ENCODE measurements at regions of chr3 and their contacts with region 1.

Region 1: DNA sequence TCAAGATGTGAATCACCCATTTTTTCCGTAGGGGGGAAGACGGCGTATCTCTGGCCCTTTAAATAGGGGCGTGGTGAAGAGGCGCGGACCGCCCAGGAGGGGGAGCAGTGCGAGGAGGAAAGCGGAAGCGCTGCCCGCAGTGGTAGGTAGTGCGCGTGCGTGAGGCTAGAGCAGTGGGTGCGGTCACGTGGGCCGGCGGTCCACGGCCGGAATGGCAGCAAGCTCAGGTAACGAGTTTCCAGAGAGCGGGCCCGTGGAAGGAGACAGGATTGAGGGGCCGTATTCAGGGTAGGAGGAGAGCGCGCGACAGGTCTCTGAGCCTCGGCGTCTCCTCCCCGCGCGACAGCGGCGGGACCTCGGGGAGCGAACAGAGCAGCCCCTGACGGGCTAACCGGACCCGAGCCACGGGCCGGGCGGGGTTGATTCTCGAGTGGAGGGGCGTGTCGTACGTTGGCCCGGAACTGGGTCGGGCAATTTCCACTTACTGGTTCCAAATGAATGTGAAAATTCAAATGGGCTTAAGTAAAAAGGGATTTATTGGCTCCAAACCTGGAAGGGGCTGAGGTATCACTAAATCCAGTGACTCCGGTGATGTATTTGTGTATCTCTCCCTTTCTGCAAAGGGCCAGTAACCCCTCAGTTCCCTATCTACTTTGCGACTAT is at the start of gene VPS8:
- DNase-seq: peak; percentile 92 to 97 (median 96)
- ATAC-seq: peak; percentile 97
- H3K4me3 ChIP-seq: peak within 1 kb of the TSS; percentile 94
- H3K4me3 Mint-ChIP-seq: peak within 1 kb of the TSS; percentile 87 to 99 (median 96)
- H3K27ac ChIP-seq: peak within 1 kb of the TSS; percentile 88
- H3K27ac Mint-ChIP-seq: peak within 1 kb of the TSS; percentile 93 to 98 (median 97)
- H3K4me1 ChIP-seq: peaks cover 15 to 44% of the 10 kb centered on the region in 2 donors
- H3K4me1 Mint-ChIP-seq: peaks cover 27 to 59% (median 57%) of the 10 kb centered on the region in 7 donors
- H3K27me3 ChIP-seq: no peaks in the 10 kb centered on the region
- H3K27me3 Mint-ChIP-seq: peaks cover 0 to 4% (median 0%) of the 10 kb centered on the region in 5 donors
- total RNA-seq, gene VPS8: 77.9 to 119 (median 106) TPM

Region 2: DNA sequence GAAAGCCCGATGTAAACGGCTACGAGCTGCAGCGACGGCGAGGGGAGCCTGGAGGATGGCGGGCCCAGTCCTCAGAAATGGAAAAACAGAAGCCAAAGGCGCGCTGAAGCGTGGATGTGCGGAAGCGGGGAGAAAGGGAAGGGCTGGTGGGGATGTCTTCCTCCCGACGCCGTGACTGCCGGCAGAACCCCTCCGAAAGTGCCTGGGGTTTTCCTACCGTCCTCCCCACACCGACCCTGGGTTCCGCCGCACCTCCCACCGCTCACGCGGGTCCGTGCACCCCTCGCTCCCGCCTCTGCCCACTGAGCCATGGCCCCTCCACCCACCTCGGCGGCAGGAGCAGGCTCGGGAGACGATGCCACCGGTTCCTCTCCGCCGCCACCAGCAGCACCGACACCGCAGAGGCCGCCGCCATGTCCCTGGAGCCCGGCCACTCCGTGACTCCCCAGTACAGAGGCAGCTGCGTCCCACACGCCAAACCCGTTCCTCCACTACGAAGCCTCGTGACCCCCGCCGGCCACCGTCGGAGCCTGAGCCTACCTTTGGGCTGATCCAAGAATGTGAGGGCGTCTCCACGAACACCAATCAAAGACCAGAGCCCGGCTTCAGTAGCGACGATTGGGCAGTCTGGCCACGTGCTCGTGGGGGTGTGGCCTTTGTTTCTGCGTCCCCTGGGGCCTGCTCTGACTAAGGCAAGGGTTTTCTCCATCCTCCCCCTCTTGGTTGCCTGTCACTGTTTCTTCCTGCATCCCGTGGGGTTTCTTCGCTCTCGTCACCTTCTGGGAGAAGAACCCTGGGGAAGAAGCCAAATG is 1712.9 kb before region 1 on chr3 and contains the start of gene MCCC1:
- CTCF ChIA-PET with region 1: no interaction called
- POLR2A ChIA-PET with region 1: no interaction called
- intact Hi-C with region 1: loop called in 1 of 2 experiments (anchors 2 kb)
- DNase-seq: peak; percentile 82 to 98 (median 97)
- ATAC-seq: peak; percentile 99
- H3K4me3 ChIP-seq: peak within 1 kb of the TSS; percentile 73
- H3K4me3 Mint-ChIP-seq: peak within 1 kb of the TSS; percentile 87 to 98 (median 97)
- H3K27ac ChIP-seq: peak within 1 kb of the TSS; percentile 83
- H3K27ac Mint-ChIP-seq: peak within 1 kb of the TSS; percentile 90 to 99 (median 97)
- H3K4me1 ChIP-seq: peaks cover 7 to 10% of the 10 kb centered on the region in 2 donors
- H3K4me1 Mint-ChIP-seq: peaks cover 18 to 52% (median 43%) of the 10 kb centered on the region in 7 donors
- H3K27me3 ChIP-seq: no peaks in the 10 kb centered on the region
- H3K27me3 Mint-ChIP-seq: no peaks in the 10 kb centered on the region
- total RNA-seq, gene MCCC1: 17.7 to 37.5 (median 31.8) TPM

Region 3: DNA sequence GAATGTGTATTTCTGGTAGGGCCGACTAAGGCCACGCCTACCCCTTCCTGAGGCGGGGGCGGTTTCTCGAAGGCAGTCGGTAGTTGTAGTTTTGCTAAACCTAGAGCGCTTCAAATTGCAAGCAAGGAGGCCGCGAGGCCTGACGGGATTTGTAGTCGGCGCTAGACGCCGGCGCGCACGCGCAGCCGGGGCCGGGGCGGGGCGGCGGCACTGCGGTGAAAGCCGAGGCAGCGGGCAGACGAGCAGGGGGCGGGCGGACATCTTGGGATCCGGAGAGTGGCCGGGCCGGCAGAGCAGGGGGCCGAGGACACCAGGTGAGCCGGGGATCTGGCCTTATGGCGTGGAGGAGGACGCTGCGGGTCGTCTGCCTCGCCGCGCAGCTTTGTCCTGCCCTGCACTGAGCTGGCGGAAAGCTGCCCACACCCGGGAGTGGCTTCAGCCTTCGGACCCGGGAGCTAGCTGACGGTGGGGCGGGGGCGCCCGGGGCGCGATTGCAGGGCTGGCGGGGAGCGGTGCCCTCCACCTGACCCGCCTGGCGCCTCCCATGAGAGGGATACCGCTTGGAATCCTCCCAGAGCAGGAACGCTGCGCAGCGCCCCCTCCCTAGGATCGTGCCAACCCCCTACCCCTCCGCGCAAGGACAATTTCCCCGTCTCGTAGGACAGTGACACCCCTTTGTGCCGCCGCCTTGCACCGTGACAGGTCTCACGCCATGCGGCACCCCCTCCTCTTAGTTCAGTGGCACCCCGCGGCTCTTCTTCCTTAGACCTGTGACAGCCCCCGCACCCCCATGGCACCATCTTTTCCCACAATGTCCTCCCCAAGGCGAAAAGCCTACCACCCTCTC is 637.3 kb before region 1 on chr3 and contains the start of gene AP2M1:
- CTCF ChIA-PET with region 1: no interaction called
- POLR2A ChIA-PET with region 1: no interaction called
- intact Hi-C with region 1: loop called in 1 of 2 experiments (anchors 1 kb)
- DNase-seq: peak; percentile 98 to 99 (median 98)
- ATAC-seq: peak; percentile 98
- H3K4me3 ChIP-seq: peak within 1 kb of the TSS; percentile 82
- H3K4me3 Mint-ChIP-seq: peak within 1 kb of the TSS; percentile 89 to 98 (median 96)
- H3K27ac ChIP-seq: peak within 1 kb of the TSS; percentile 95
- H3K27ac Mint-ChIP-seq: peak within 1 kb of the TSS; percentile 75 to 94 (median 90)
- H3K4me1 ChIP-seq: peaks cover 18 to 20% of the 10 kb centered on the region in 2 donors
- H3K4me1 Mint-ChIP-seq: peaks cover 14 to 46% (median 38%) of the 10 kb centered on the region in 7 donors
- H3K27me3 ChIP-seq: no peaks in the 10 kb centered on the region
- H3K27me3 Mint-ChIP-seq: no peaks in the 10 kb centered on the region
- total RNA-seq, gene AP2M1: 111 to 217 (median 185) TPM

Region 4: DNA sequence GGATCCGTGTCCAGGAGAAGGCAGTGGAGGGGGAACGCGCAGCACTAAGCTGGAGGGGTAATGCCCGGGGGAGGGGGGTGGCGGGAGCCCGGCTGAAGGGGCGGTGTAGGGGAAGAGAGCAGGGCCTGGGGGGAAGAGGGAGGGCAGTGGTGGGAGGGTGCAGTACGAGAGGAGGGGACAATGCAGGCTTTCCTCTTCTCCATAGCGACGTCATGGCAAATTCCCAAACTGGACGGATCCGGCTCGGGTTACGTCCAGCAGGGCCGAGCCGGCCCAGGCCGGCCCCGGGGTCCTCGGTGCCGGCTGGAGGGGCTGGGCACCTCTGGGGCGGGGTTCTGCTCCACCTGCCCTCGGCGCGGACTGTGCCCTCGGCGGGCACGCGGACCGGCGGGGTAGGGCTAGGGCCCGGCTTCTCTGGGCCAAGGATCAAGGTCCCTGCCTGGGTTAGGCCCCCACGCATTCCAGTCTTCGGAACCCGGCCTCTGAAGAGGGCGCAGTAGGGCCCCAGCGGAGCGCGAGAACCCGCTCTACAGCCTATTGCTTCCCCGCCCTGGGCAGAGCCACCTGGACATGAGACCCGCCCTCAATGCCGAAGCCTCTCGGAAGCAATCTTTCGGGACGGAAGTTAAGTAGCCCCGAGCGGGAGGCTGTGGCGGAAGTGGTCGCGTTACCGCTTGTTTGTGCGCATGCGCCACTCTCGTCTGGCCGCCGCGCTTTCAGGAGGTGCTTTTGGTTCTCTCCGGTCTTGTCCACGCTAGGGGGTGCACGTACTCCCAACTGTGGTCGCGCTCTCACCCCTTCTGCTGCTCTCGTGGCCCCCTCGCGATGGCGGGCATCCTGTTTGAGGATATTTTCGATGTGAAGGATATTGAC is 449.2 kb before region 1 on chr3:
- CTCF ChIA-PET with region 1: no interaction called
- POLR2A ChIA-PET with region 1: no interaction called
- intact Hi-C with region 1: loop called (anchors 1 to 2 kb)
- DNase-seq: peak; percentile 74 to 94 (median 90)
- ATAC-seq: peak; percentile 87
- H3K4me3 ChIP-seq: peak overlapping the region; percentile 97
- H3K4me3 Mint-ChIP-seq: peak overlapping the region; percentile 95 to 100 (median 99)
- H3K27ac ChIP-seq: peak overlapping the region; percentile 84
- H3K27ac Mint-ChIP-seq: peak overlapping the region; percentile 91 to 98 (median 97)
- H3K4me1 ChIP-seq: peaks cover 11 to 13% of the 10 kb centered on the region in 2 donors
- H3K4me1 Mint-ChIP-seq: peaks cover 25 to 37% (median 30%) of the 10 kb centered on the region in 7 donors
- H3K27me3 ChIP-seq: no peaks in the 10 kb centered on the region
- H3K27me3 Mint-ChIP-seq: peaks cover 0 to 13% (median 0%) of the 10 kb centered on the region in 5 donors

Region 5: GRCh38 chr3:185152410-185153210 is 340.5 kb after region 1 on chr3 and contains the start of gene C3orf70:
- CTCF ChIA-PET with region 1: no interaction called
- POLR2A ChIA-PET with region 1: no interaction called
- intact Hi-C with region 1: loop called in 1 of 2 experiments (anchors 10 kb)
- DNase-seq: peak in 6 of 9 donors; percentile 4 to 38 (median 10)
- ATAC-seq: peak; percentile 64
- H3K4me3 ChIP-seq: peak within 1 kb of the TSS; percentile 17
- H3K4me3 Mint-ChIP-seq: peak within 1 kb of the TSS in 8 of 10 donors; percentile 67 to 89 (median 80)
- H3K27ac ChIP-seq: no peak within 1 kb of the TSS
- H3K27ac Mint-ChIP-seq: peak within 1 kb of the TSS in 1 of 9 donors; percentile 20
- H3K4me1 ChIP-seq: peaks cover 0 to 4% of the 10 kb centered on the region in 2 donors
- H3K4me1 Mint-ChIP-seq: peaks cover 0 to 6% (median 0%) of the 10 kb centered on the region in 7 donors
- H3K27me3 ChIP-seq: peaks cover 3 to 19% of the 10 kb centered on the region in 2 donors
- H3K27me3 Mint-ChIP-seq: peaks cover 35 to 45% (median 41%) of the 10 kb centered on the region in 5 donors
- total RNA-seq, gene C3orf70: 0.05 TPM in 1 of 5 experiments, not detected in the others

Region 6: DNA sequence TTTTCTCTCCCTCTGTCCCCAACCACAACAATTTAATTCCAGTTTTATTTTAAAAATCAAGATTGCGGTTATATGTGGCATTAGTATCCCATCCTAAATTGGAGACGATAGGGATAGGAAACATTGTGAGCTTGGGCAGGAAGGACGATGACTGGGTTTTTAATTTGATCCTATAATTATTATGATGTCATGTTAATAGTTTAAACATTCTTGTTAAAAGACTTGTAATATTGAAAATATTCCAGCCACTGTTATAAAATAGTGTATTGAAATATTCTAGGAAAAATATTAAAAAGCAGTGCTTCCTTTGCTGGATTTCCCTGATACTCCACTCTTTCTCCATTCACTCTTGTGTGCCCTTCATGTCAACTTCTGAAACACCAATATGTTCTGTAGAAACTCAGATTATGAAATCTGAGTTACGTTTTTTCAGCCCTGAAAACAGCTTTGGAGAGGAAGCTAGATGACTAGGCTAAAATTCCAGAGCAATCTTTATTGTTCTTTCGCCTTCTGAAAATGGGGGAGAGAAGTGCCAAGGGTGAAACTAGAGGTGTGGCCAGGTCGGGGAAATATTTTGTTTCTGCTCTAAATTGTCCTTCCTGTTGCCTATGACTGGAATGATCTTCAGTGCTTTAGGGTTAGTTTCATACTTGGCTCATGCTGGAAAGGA is 504.7 kb after region 1 on chr3:
- CTCF ChIA-PET with region 1: no interaction called
- POLR2A ChIA-PET with region 1: no interaction called
- intact Hi-C with region 1: no loop called
- DNase-seq: no peak
- ATAC-seq: peak; percentile 31
- H3K4me3 ChIP-seq: no peak overlapping the region
- H3K4me3 Mint-ChIP-seq: no peak overlapping the region
- H3K27ac ChIP-seq: no peak overlapping the region
- H3K27ac Mint-ChIP-seq: no peak overlapping the region
- H3K4me1 ChIP-seq: no peaks in the 10 kb centered on the region
- H3K4me1 Mint-ChIP-seq: peaks cover 0 to 4% (median 0%) of the 10 kb centered on the region in 7 donors
- H3K27me3 ChIP-seq: no peaks in the 10 kb centered on the region
- H3K27me3 Mint-ChIP-seq: peaks cover 0 to 16% (median 0%) of the 10 kb centered on the region in 5 donors

Region 7: GRCh38 chr3:185937689-185938463 is 1125.7 kb after region 1 on chr3 and contains the start of gene TRA2B:
- CTCF ChIA-PET with region 1: no interaction called
- POLR2A ChIA-PET with region 1: no interaction called
- intact Hi-C with region 1: loop called in 1 of 2 experiments (anchors 5 kb)
- DNase-seq: peak; percentile 93 to 99 (median 99)
- ATAC-seq: peak; percentile 94
- H3K4me3 ChIP-seq: peak within 1 kb of the TSS; percentile 99
- H3K4me3 Mint-ChIP-seq: peak within 1 kb of the TSS; percentile 91 to 100 (median 100)
- H3K27ac ChIP-seq: peak within 1 kb of the TSS; percentile 95
- H3K27ac Mint-ChIP-seq: peak within 1 kb of the TSS; percentile 99 to 100 (median 100)
- H3K4me1 ChIP-seq: peaks cover 16 to 20% of the 10 kb centered on the region in 2 donors
- H3K4me1 Mint-ChIP-seq: peaks cover 27 to 52% (median 41%) of the 10 kb centered on the region in 7 donors
- H3K27me3 ChIP-seq: no peaks in the 10 kb centered on the region
- H3K27me3 Mint-ChIP-seq: peaks cover 0 to 16% (median 0%) of the 10 kb centered on the region in 5 donors
- total RNA-seq, gene TRA2B: 194 to 673 (median 216) TPM

Measured in naive thymus-derived CD4-positive, alpha-beta T cell (primary cell).